Astrocyte of the cerebellum (primary cell): ENCODE measurements at regions of chr6 and their contacts with region 1.

Region 1: GRCh38 chr6:74939721-74940620 is 265.9 kb downstream of the COL12A1 start:
- DNase-seq: no peak
- H3K4me3 ChIP-seq: no peak overlapping the region
- CTCF ChIP-seq: no peak

Region 2: GRCh38 chr6:74735304-74735703 is 204.7 kb before region 1 on chr6:
- in situ Hi-C with region 1: no loop called
- DNase-seq: peak; percentile 78
- H3K4me3 ChIP-seq: no peak overlapping the region
- CTCF ChIP-seq: no peak

Region 3: GRCh38 chr6:75024828-75025227 is 84.9 kb after region 1 on chr6:
- in situ Hi-C with region 1: loop called (anchors 5 kb)
- DNase-seq: no peak
- H3K4me3 ChIP-seq: no peak overlapping the region
- CTCF ChIP-seq: no peak